K562 (cell line): ENCODE measurements at regions of chr17 and their contacts with region 1.

Region 1: GRCh38 chr17:81860756-81861518 is 602 bp upstream of the P4HB start:
- DNase-seq: peak; percentile 89 to 100 (median 98)
- ATAC-seq: peak; percentile 93
- H3K4me3 ChIP-seq: peak overlapping the region; percentile 87
- H3K27ac ChIP-seq: peak overlapping the region; percentile 96
- H3K4me1 ChIP-seq: peaks cover 31 to 53% of the 10 kb centered on the region in 2 experiments
- H3K27me3 ChIP-seq: no peaks in the 10 kb centered on the region
- CTCF ChIP-seq: no peak
- EP300 ChIP-seq: no peak
- POLR2A ChIP-seq: peak; percentile 91
- RAD21 ChIP-seq: no peak

Region 2: GRCh38 chr17:81733507-81734404 is 127.2 kb before region 1 on chr17:
- CTCF ChIA-PET with region 1: interaction called, 4 read pairs
- POLR2A ChIA-PET with region 1: interaction called, 5 read pairs
- in situ Hi-C with region 1: loop called (anchors 5 kb)
- intact Hi-C with region 1: no loop called
- DNase-seq: peak; percentile 81 to 92 (median 90)
- ATAC-seq: peak; percentile 96
- H3K4me3 ChIP-seq: no peak overlapping the region
- H3K27ac ChIP-seq: no peak overlapping the region
- H3K4me1 ChIP-seq: peaks cover 10 to 62% of the 10 kb centered on the region in 2 experiments; a peak in 4 of 5 replicates
- H3K27me3 ChIP-seq: no peaks in the 10 kb centered on the region
- CTCF ChIP-seq: peak; percentile 92 to 94 (median 92)
- EP300 ChIP-seq: no peak
- POLR2A ChIP-seq: no peak
- RAD21 ChIP-seq: peak; percentile 78 to 94

Region 3: DNA sequence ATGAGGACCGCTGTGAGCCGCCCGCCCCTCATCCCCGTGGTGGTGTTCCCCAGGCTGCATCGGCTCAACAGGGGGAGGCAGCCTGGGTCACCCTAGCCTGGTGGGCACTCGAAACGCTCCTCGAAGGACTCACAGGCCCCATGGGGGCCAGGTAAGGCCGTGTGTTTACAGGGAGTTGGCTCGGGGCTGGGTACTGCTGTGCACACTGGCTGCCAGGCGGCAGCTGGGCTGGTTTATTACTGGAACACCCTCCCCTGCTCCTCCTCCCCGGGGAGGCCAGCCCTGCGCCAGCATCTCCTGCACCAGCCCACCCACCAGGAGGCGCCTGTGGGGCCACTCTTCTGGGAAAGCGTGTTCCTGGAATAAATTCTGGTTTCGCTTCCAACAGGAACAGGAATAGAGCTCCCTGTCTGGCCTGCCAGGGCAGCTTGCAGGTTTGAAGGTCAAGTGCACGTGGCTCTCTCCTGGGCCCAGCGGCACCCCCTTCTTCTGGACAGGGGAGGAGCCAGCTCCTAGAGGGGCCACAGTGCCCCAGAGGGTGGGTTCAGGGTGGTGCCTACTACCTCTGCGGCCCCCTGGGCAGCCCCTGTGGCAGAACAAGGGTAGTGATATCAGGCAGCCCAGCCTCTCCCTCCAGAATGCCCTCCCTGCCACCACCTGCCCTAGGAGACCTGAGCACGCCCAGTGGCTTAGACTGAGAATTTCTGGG is 39.2 kb before region 1 on chr17:
- CTCF ChIA-PET with region 1: no interaction called
- POLR2A ChIA-PET with region 1: interaction called, 5 read pairs
- in situ Hi-C with region 1: no loop called
- intact Hi-C with region 1: loop called (anchors 5 kb)
- DNase-seq: peak; percentile 90 to 94 (median 92)
- ATAC-seq: peak; percentile 93
- H3K4me3 ChIP-seq: no peak overlapping the region
- H3K27ac ChIP-seq: peak overlapping the region; percentile 84
- H3K4me1 ChIP-seq: peaks cover 21 to 73% of the 10 kb centered on the region in 2 experiments
- H3K27me3 ChIP-seq: no peaks in the 10 kb centered on the region
- CTCF ChIP-seq: peak; percentile 84 to 92 (median 88)
- EP300 ChIP-seq: peak; percentile 81
- POLR2A ChIP-seq: peak; percentile 53; the same call in 1 of the 2 replicates
- RAD21 ChIP-seq: peak; percentile 64 to 79

Region 4: DNA sequence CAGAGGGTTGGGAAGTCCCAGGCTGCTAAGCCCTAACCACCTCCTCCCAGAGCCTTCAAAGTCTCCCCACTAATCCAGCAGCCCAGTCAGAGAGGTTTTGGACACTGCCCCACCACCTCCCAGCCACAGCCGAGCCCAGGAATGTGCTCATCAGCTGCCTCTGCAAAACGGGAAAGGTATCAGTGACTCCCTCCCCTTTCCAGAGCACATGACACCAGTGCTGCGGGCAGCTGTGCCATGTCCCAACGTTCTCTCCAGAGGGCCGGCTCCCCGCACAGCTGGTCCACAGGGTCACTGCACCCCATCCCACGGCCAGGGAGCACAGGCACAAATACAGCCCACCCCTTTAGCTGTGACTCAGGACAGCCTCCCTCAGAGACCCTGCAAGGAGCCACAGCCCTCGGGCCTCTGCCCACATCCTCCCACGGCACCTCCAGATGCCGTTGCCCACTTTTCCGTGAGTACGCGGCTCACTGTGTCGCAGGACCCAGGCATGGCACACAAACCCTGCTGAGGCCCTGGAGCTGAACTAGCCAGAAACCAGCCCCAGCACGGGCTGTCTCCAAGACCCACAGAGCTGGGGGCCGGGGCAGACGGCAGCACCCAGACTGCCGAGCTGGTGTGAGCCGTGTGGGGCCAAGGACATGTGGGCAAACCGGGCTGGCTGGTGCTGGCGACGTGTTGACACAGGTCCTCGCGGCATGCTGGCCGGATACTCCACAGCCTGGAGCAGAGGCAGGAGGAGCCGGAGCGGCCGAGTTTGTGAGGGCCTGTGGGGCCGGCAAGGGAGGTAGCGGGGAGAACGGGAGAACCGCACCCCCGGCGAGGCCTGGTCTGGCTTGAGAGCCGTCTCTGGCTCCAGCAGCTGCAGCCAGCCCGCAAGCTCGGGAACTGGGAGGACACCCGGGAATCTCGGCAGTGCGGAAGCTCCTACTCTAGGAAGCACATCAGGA is 19.8 kb before region 1 on chr17:
- CTCF ChIA-PET with region 1: no interaction called
- POLR2A ChIA-PET with region 1: interaction called, 85 read pairs
- in situ Hi-C with region 1: no loop called
- intact Hi-C with region 1: no loop called
- DNase-seq: no peak
- ATAC-seq: no peak
- H3K4me3 ChIP-seq: no peak overlapping the region
- H3K27ac ChIP-seq: no peak overlapping the region
- H3K4me1 ChIP-seq: peaks cover 4 to 50% of the 10 kb centered on the region in 2 experiments; a peak in 4 of 5 replicates
- H3K27me3 ChIP-seq: no peaks in the 10 kb centered on the region
- CTCF ChIP-seq: no peak
- EP300 ChIP-seq: no peak
- POLR2A ChIP-seq: no peak
- RAD21 ChIP-seq: no peak

Region 5: DNA sequence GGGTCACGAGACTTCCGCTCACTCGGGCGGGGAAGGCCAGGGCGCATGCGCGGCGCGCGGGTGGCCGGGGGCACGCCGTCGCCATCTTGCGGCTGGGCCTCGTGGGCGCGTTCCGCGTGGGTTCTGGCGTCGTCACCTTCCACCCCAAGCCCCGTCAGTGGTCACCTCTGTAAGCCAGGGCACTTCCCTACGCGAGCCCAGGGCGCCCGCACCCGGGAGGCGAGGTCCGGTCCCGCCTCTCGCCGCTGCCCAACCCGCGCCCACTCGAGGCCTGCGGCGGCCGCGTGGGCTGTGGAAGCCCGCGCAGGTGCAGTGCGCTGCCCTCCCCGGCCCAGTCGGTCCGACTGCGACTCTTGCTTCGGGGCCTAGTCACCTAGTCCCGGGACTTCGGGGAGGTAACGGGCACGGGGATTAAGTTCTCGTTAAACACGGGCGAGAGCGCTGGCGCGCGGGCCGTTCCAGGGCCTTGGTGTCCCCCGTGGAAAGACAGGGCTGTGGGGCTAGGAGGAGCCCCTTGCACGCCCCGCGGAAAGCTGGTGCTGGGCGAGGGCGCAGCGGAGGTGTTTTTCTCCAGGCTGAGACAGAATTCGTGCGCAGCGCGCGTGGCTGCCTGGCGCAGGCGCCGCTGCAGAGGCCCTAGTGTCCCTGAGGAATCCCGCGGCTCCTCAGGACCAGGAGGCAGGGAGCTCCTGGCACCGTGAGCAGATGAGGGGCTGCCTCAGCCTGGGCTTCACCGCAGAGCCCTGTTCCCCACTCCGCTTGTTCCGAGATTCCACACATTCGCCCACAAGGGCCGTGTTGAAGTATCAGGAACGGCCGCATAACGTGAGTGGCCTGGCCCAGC is 10.7 kb after region 1 on chr17:
- CTCF ChIA-PET with region 1: no interaction called
- POLR2A ChIA-PET with region 1: interaction called, 13 read pairs
- in situ Hi-C with region 1: no loop called
- intact Hi-C with region 1: no loop called
- DNase-seq: peak in 2 of 4 experiments; percentile 95 to 97
- ATAC-seq: peak; percentile 4
- H3K4me3 ChIP-seq: peak overlapping the region; percentile 93
- H3K27ac ChIP-seq: peak overlapping the region; percentile 100
- H3K4me1 ChIP-seq: peaks cover 27 to 65% of the 10 kb centered on the region in 2 experiments
- H3K27me3 ChIP-seq: no peaks in the 10 kb centered on the region
- CTCF ChIP-seq: peak in 2 of 3 experiments; percentile 27 to 29; a peak in 3 of 6 replicates
- EP300 ChIP-seq: no peak
- POLR2A ChIP-seq: peak; percentile 75
- RAD21 ChIP-seq: no peak

Region 6: DNA sequence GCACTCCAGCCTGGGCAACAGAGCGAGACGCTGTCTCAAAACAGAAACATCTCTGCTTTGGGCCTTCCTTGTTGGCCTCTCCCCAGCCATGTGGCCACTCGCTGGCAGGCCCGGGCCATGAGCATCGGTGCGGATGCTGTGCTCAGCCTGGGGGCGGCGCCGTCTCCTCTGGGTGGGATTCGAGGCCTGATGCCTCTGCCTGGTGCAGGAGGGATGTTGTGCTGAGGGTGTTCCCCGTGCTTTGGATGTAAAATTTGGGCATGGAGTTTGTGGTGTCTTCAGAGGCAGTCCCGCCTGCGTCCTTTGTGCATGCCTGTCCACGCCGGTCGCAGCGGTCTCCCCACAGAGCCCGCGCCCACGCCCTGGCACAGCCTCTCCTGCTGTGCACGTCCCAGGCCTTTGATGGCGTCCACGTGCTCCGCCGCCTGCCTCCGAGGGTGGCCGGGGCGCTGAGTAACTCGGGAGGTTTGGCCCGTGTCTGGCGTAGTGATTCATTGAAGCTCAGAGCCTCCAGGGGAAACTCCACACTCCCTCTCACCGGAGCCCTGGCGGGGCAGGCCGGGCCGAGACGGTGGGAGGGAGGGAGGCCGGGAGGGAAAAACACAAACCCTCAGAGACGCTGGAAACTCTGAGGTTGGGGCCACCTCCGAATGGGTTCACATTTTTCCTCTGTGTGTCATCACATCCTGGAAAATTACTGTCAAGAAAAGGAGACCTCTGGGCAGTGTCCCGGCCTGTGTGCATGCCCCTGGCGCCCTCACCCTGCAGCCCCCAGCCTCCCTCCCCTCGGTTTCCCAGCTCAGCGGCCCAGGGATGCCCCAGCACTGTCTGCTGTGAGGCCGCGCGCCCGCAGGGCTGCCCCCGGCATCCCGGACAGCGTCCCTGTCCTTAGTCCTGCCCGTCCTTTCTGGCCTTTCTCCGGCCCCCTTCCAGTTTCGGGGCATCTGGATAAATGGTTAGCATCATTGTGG is 142.8 kb after region 1 on chr17:
- CTCF ChIA-PET with region 1: no interaction called
- POLR2A ChIA-PET with region 1: no interaction called
- in situ Hi-C with region 1: no loop called
- intact Hi-C with region 1: no loop called
- DNase-seq: no peak
- ATAC-seq: no peak
- H3K4me3 ChIP-seq: no peak overlapping the region
- H3K27ac ChIP-seq: no peak overlapping the region
- H3K4me1 ChIP-seq: peaks cover 0 to 76% of the 10 kb centered on the region in 2 experiments; a peak in 2 of 5 replicates
- H3K27me3 ChIP-seq: no peaks in the 10 kb centered on the region
- CTCF ChIP-seq: no peak
- EP300 ChIP-seq: no peak
- POLR2A ChIP-seq: no peak
- RAD21 ChIP-seq: no peak

Region 7: DNA sequence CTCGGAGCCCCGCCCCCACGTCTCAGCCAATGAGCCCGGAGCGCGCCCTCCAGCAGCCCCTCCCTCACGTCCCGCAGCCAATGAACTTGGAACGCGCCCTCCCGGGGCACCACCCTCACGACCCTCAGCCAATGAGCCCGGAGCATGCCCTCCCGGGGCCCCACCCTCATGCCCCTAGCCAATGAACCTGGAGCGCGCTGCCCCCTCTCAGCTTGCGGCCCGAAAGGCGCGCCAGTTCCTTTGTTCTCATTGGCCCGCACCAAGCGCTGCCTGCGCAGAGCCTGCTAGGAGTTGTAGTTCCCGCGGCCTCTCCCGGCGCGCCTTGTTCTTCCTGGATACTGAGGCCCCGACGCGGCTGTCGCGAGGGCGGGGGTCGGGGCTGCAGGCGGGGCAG is 162.0 kb after region 1 on chr17 and contains the start of gene LRRC45:
- CTCF ChIA-PET with region 1: no interaction called
- POLR2A ChIA-PET with region 1: no interaction called
- in situ Hi-C with region 1: no loop called
- intact Hi-C with region 1: loop called (anchors 2 kb)
- DNase-seq: peak; percentile 96 to 99 (median 98)
- ATAC-seq: peak; percentile 94
- H3K4me3 ChIP-seq: peak within 1 kb of the TSS; percentile 91
- H3K27ac ChIP-seq: peak within 1 kb of the TSS; percentile 77
- H3K4me1 ChIP-seq: peaks cover 14 to 89% of the 10 kb centered on the region in 2 experiments
- H3K27me3 ChIP-seq: no peaks in the 10 kb centered on the region
- CTCF ChIP-seq: no peak
- EP300 ChIP-seq: no peak
- POLR2A ChIP-seq: no peak
- RAD21 ChIP-seq: no peak
- polyA plus RNA-seq, gene LRRC45: not detected